ENCODE measurements at regions of chr11 and their contacts with region 1.

Region 1: GRCh38 chr11:106733635-106734034 is 284.6 kb downstream of the GUCY1A2 start:
- DNase-seq: no peak
- H3K4me3 ChIP-seq: no peak overlapping the region
- H3K27ac ChIP-seq: no peak overlapping the region
- H3K4me1 ChIP-seq: no peaks in the 10 kb centered on the region
- H3K27me3 ChIP-seq: no peaks in the 10 kb centered on the region
- CTCF ChIP-seq: no peak
- EP300 ChIP-seq: no peak
- POLR2A ChIP-seq: no peak

Region 2: GRCh38 chr11:106794058-106794457 is 60.4 kb after region 1 on chr11:
- in situ Hi-C with region 1: loop called in 1 of 4 experiments (anchors 10 kb)
- intact Hi-C with region 1: no loop called
- DNase-seq: no peak
- H3K4me3 ChIP-seq: no peak overlapping the region
- H3K27ac ChIP-seq: no peak overlapping the region
- H3K4me1 ChIP-seq: no peaks in the 10 kb centered on the region
- H3K27me3 ChIP-seq: no peaks in the 10 kb centered on the region
- CTCF ChIP-seq: no peak
- EP300 ChIP-seq: no peak
- POLR2A ChIP-seq: no peak

Region 3: GRCh38 chr11:107043242-107044006 is 309.8 kb after region 1 on chr11:
- in situ Hi-C with region 1: no loop called
- intact Hi-C with region 1: no loop called
- DNase-seq: no peak
- H3K4me3 ChIP-seq: no peak overlapping the region
- H3K27ac ChIP-seq: no peak overlapping the region
- H3K4me1 ChIP-seq: no peaks in the 10 kb centered on the region
- H3K27me3 ChIP-seq: no peaks in the 10 kb centered on the region
- CTCF ChIP-seq: no peak
- EP300 ChIP-seq: no peak
- POLR2A ChIP-seq: no peak